Head of caudate nucleus (tissue), 42 donors: ENCODE measurements at regions of chr16 and their contacts with region 1.

Region 1: GRCh38 chr16:57863434-57864160 is 61.3 kb upstream of the KIFC3 start:
- DNase-seq: peak; percentile 36 to 86 (median 68)

Region 2: DNA sequence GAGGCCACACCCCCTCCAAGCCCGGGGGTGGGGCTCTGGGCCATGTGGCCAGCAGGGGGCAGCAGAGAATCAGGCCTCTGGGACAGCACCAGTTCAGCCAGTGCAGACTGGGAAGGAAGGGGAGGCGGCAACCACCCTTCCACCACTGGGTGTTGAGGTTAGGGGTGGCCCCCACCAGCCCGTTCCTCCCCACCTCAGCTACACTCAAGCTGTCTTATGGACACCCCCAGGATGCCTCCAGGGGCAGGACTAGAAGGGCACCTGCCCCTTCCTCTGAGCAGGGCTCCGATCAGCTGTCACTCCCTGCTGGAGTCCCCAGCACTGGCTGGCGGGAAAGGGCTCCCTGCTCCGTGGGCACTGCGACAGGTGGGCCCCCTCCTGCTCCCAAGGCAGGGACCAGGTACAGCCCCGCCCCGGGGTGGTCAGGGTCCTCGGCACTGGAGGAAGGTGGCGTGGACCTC is 106.2 kb before region 1 on chr16:
- intact Hi-C with region 1: loop called (anchors 5 kb)
- DNase-seq: peak; percentile 72 to 96 (median 90)

Region 3: GRCh38 chr16:57795431-57795878 is 68.1 kb before region 1 on chr16:
- intact Hi-C with region 1: loop called (anchors 10 kb)
- DNase-seq: peak in 38 of 42 donors; percentile 40 to 88 (median 66)

Region 4: GRCh38 chr16:57838161-57838560 is 25.4 kb before region 1 on chr16:
- intact Hi-C with region 1: no loop called
- DNase-seq: peak; percentile 21 to 88 (median 66)

Region 5: GRCh38 chr16:57906382-57907316 is 43.1 kb after region 1 on chr16:
- intact Hi-C with region 1: no loop called
- DNase-seq: peak in 31 of 42 donors; percentile 5 to 68 (median 36)